Naive thymus-derived CD4-positive, alpha-beta T cell (primary cell): ENCODE measurements at regions of chr2 and their contacts with region 1.

Region 1: GRCh38 chr2:85935746-85936208 is 47.0 kb upstream of the ST3GAL5 start:
- DNase-seq: no peak
- ATAC-seq: no peak
- H3K4me3 ChIP-seq: no peak overlapping the region
- H3K4me3 Mint-ChIP-seq: no peak overlapping the region
- H3K27ac ChIP-seq: no peak overlapping the region
- H3K27ac Mint-ChIP-seq: no peak overlapping the region
- H3K4me1 ChIP-seq: peaks cover 0 to 11% of the 10 kb centered on the region in 2 donors
- H3K4me1 Mint-ChIP-seq: peaks cover 6 to 30% (median 27%) of the 10 kb centered on the region in 7 donors
- H3K27me3 ChIP-seq: no peaks in the 10 kb centered on the region
- H3K27me3 Mint-ChIP-seq: peaks cover 0 to 10% (median 0%) of the 10 kb centered on the region in 5 donors

Region 2: DNA sequence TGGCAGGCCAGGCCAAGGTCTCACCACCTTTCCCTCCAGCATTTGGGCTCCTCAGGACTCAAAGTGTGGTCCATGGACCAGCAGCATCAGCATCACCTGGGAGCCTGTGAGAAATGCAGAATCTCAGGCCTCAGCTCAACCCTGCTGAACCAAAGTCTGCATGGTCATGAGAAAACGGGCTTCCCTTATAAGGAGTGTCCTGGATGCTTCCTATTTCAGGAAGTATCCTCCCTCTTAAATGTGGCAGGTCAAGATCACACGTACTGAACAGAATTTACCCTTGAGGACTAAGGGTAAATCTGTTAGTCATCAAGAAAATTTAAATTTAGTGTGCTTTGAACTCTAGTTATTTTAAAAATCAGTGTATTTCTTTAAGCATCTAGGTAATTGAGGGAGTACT is 843.2 kb after region 1 on chr2:
- CTCF ChIA-PET with region 1: no interaction called
- POLR2A ChIA-PET with region 1: no interaction called
- intact Hi-C with region 1: loop called in 1 of 2 experiments (anchors 10 kb)
- DNase-seq: no peak
- ATAC-seq: no peak
- H3K4me3 ChIP-seq: no peak overlapping the region
- H3K4me3 Mint-ChIP-seq: no peak overlapping the region
- H3K27ac ChIP-seq: no peak overlapping the region
- H3K27ac Mint-ChIP-seq: no peak overlapping the region
- H3K4me1 ChIP-seq: peaks cover 0 to 7% of the 10 kb centered on the region in 2 donors
- H3K4me1 Mint-ChIP-seq: peaks cover 0 to 2% (median 0%) of the 10 kb centered on the region in 7 donors
- H3K27me3 ChIP-seq: no peaks in the 10 kb centered on the region
- H3K27me3 Mint-ChIP-seq: no peaks in the 10 kb centered on the region